ENCODE measurements at regions of chr2 and their contacts with region 1.

Region 1: GRCh38 chr2:236200378-236200777 is 32.2 kb upstream of the GBX2 start:
- DNase-seq: no peak
- H3K4me3 ChIP-seq: no peak overlapping the region
- H3K27ac ChIP-seq: no peak overlapping the region
- H3K4me1 ChIP-seq: no peaks in the 10 kb centered on the region
- H3K27me3 ChIP-seq: no peaks in the 10 kb centered on the region
- CTCF ChIP-seq: no peak
- POLR2A ChIP-seq: no peak

Region 2: GRCh38 chr2:235827585-235827992 is 372.8 kb before region 1 on chr2:
- intact Hi-C with region 1: loop called (anchors 5 kb)
- DNase-seq: no peak
- H3K4me3 ChIP-seq: no peak overlapping the region
- H3K27ac ChIP-seq: no peak overlapping the region
- H3K4me1 ChIP-seq: no peaks in the 10 kb centered on the region
- H3K27me3 ChIP-seq: no peaks in the 10 kb centered on the region
- CTCF ChIP-seq: no peak
- POLR2A ChIP-seq: no peak

Region 3: DNA sequence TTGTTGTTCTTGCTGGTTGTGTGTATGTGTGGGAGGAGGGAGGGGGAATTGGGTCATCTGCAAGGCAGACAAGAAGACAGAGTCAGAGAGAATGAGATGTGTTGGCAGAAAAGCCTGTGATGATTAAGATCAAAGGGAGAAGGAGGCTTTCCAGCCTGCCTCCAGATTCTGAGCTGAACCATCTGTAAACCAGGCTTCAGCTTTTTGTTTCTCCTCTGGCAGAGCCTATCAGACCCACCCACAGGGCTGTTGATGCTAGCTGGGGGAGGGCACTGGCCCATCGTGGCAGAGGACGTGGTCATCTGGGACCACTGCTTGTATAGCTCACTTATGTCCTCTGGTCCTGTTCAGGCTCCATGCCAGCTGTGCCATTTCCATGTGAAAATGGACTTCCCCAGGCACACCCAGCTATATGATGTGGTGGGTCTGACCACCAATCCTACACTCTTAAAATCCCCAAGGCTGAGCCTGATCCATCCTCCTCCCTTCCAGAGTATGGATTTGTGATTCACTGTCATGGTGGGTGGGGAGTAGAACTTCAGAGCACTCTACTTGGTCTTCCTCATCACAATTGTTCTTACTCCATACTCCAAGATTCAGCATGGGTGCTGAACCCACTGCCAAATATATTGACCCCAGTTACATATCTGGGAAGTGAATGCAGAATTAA is 1241.4 kb after region 1 on chr2:
- intact Hi-C with region 1: no loop called
- DNase-seq: no peak
- H3K4me3 ChIP-seq: no peak overlapping the region
- H3K27ac ChIP-seq: peak overlapping the region; percentile 83
- H3K4me1 ChIP-seq: peaks cover 22% of the 10 kb centered on the region
- H3K27me3 ChIP-seq: no peaks in the 10 kb centered on the region
- CTCF ChIP-seq: no peak
- POLR2A ChIP-seq: no peak

Region 4: GRCh38 chr2:237616734-237617586 is 1416.6 kb after region 1 on chr2:
- intact Hi-C with region 1: no loop called
- DNase-seq: no peak
- H3K4me3 ChIP-seq: no peak overlapping the region
- H3K27ac ChIP-seq: peak overlapping the region; percentile 77
- H3K4me1 ChIP-seq: peaks cover 37% of the 10 kb centered on the region
- H3K27me3 ChIP-seq: no peaks in the 10 kb centered on the region
- CTCF ChIP-seq: no peak
- POLR2A ChIP-seq: no peak